ENCODE measurements at regions of chr9 and their contacts with region 1.

Region 1: DNA sequence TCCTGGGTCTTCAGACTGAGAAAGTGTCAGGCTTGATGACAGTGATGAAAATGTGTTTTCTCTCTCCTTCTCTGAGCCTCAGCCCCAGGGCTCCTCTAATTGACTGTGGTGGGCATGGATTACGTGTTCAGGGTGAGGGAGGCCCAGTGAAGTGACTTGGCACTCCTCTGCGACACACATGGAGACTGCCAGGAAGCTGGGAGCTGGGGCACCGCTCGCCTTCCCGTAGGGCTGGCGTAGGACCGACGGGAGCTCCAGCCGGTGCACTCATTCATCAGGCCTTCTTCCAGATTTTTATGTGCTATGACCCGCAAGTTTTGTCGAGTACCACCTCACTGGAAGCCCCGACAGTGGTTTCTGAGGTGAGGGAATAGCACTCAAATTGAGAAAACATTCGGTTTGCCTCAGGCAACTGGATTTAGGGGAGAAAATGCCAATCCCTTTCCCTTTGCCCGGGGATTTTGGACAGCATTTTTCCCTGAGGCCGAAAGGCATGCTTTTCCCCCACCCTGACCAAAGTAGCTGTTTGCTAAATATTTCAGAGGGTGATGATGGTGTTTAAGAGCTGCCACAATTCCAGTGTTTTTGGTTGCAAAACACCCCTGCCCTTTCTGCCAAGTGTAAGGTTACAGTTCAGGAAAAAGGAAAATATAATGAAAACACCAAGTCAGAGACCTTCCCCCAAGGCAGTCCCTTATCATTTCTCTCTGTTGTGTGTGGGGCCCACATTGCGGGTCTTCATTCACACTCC is 83.7 kb downstream of the PCSK5 start:
- DNase-seq: no peak
- ATAC-seq: no peak
- H3K4me3 Mint-ChIP-seq: no peak overlapping the region
- H3K27ac Mint-ChIP-seq: no peak overlapping the region
- H3K4me1 Mint-ChIP-seq: peaks cover 29% of the 10 kb centered on the region
- H3K27me3 Mint-ChIP-seq: no peaks in the 10 kb centered on the region

Region 2: GRCh38 chr9:75896193-75896592 is 78.0 kb before region 1 on chr9:
- CTCF ChIA-PET with region 1: no interaction called
- POLR2A ChIA-PET with region 1: no interaction called
- intact Hi-C with region 1: loop called in 1 of 2 experiments (anchors 2 kb)
- DNase-seq: no peak
- ATAC-seq: no peak
- H3K4me3 Mint-ChIP-seq: no peak overlapping the region
- H3K27ac Mint-ChIP-seq: no peak overlapping the region
- H3K4me1 Mint-ChIP-seq: peaks cover 28% of the 10 kb centered on the region
- H3K27me3 Mint-ChIP-seq: peaks cover 2% of the 10 kb centered on the region

Region 3: GRCh38 chr9:75918154-75918553 is 56.0 kb before region 1 on chr9:
- CTCF ChIA-PET with region 1: no interaction called
- POLR2A ChIA-PET with region 1: no interaction called
- intact Hi-C with region 1: no loop called
- DNase-seq: peak; percentile 50
- ATAC-seq: peak; percentile 78
- H3K4me3 Mint-ChIP-seq: no peak overlapping the region
- H3K27ac Mint-ChIP-seq: no peak overlapping the region
- H3K4me1 Mint-ChIP-seq: peaks cover 13% of the 10 kb centered on the region
- H3K27me3 Mint-ChIP-seq: no peaks in the 10 kb centered on the region

Region 4: DNA sequence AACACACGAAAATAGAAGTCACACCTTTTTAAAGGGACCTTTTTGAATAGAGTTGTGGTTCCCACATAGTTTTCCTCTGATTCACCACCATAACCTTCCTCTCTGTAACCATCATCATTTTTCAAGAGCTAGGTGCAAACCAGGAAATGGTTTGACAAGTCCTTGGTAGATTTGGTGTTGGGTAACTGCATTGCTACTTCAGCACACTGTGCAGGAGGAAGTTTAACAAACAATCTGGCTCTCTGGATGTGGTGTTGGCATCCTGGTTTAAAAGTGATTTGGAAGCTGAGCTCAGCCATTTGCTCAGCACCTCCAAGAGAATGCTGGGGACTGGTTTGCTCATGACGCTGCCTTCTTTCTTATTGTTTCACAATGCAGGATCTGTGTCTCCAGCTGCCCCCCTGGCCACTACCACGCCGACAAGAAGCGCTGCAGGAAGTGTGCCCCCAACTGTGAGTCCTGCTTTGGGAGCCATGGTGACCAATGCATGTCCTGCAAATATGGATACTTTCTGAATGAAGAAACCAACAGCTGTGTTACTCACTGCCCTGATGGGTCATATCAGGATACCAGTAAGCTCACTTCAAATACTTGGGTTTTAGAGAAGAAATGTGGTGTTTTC is 206.9 kb after region 1 on chr9:
- CTCF ChIA-PET with region 1: no interaction called
- POLR2A ChIA-PET with region 1: no interaction called
- intact Hi-C with region 1: no loop called
- DNase-seq: peak; percentile 7
- ATAC-seq: peak; percentile 93
- H3K4me3 Mint-ChIP-seq: no peak overlapping the region
- H3K27ac Mint-ChIP-seq: no peak overlapping the region
- H3K4me1 Mint-ChIP-seq: peaks cover 10% of the 10 kb centered on the region
- H3K27me3 Mint-ChIP-seq: no peaks in the 10 kb centered on the region

Measured in activated CD4-positive, alpha-beta T cell treated with anti-CD3 and anti-CD28 coated beads for 36 hours (primary cell).